Activated CD4-positive, alpha-beta T cell treated with anti-CD3 and anti-CD28 coated beads for 36 hours (primary cell): ENCODE measurements at regions of chr5 and their contacts with region 1.

Region 1: DNA sequence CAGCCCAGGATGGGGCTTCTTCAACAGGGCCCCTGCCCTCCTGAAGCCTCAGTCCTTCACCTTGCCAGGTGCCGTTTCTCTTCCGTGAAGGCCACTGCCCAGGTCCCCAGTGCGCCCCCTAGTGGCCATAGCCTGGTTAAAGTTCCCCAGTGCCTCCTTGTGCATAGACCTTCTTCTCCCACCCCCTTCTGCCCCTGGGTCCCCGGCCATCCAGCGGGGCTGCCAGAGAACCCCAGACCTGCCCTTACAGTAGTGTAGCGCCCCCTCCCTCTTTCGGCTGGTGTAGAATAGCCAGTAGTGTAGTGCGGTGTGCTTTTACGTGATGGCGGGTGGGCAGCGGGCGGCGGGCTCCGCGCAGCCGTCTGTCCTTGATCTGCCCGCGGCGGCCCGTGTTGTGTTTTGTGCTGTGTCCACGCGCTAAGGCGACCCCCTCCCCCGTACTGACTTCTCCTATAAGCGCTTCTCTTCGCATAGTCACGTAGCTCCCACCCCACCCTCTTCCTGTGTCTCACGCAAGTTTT is 23.6 kb downstream of the PCDHGC5 start:
- DNase-seq: peak; percentile 93
- ATAC-seq: peak; percentile 17
- H3K4me3 Mint-ChIP-seq: peak overlapping the region; percentile 75
- H3K27ac Mint-ChIP-seq: peak overlapping the region; percentile 86
- H3K4me1 Mint-ChIP-seq: peaks cover 38% of the 10 kb centered on the region
- H3K27me3 Mint-ChIP-seq: no peaks in the 10 kb centered on the region

Region 2: GRCh38 chr5:141223112-141223783 is 289.2 kb before region 1 on chr5 and contains the start of gene PCDHB14:
- CTCF ChIA-PET with region 1: interaction called, 12 read pairs
- POLR2A ChIA-PET with region 1: no interaction called
- intact Hi-C with region 1: no loop called
- DNase-seq: no peak
- ATAC-seq: no peak
- H3K4me3 Mint-ChIP-seq: peak within 1 kb of the TSS; percentile 18
- H3K27ac Mint-ChIP-seq: no peak within 1 kb of the TSS
- H3K4me1 Mint-ChIP-seq: peaks cover 5% of the 10 kb centered on the region
- H3K27me3 Mint-ChIP-seq: peaks cover 48% of the 10 kb centered on the region
- total RNA-seq, gene PCDHB14: not detected

Region 3: DNA sequence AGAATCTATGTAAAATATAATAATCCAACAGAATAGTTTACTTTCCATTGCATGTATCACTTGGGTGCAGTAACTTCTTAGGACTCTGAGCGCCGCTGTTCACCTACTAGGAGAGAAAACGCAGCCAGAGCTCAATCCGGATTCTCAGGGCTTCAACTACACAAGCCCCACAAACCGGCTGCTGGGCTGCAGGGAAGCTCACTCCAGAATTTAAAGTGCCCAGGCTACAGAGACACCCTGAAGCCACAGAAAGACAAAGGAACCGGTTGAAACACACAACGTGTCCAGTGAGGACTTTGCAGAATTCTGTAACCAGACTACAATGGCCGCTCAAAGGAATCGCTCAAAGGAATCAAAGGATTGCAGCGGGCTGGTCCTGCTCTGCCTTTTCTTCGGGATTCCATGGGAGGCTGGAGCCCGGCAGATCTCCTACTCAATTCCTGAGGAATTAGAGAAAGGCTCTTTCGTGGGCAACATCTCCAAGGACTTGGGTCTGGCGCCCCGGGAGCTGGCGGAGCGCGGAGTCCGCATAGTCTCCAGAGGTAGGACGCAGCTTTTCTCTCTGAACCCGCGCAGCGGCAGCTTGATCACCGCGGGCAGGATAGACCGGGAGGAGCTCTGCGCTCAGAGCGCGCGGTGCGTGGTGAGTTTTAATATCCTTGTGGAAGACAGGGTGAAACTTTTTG is 99.5 kb before region 1 on chr5 and contains the start of gene PCDHGA10:
- CTCF ChIA-PET with region 1: interaction called, 40 read pairs
- POLR2A ChIA-PET with region 1: no interaction called
- intact Hi-C with region 1: loop called (anchors 1 to 2 kb)
- DNase-seq: peak; percentile 74
- ATAC-seq: peak; percentile 76
- H3K4me3 Mint-ChIP-seq: peak within 1 kb of the TSS; percentile 62
- H3K27ac Mint-ChIP-seq: no peak within 1 kb of the TSS
- H3K4me1 Mint-ChIP-seq: peaks cover 10% of the 10 kb centered on the region
- H3K27me3 Mint-ChIP-seq: peaks cover 63% of the 10 kb centered on the region
- total RNA-seq, gene PCDHGA10: 0.07 TPM in 1 of 2 experiments, not detected in the other

Region 4: GRCh38 chr5:141430332-141431113 is 81.9 kb before region 1 on chr5 and contains the start of gene PCDHGA12:
- CTCF ChIA-PET with region 1: interaction called, 21 read pairs
- POLR2A ChIA-PET with region 1: no interaction called
- intact Hi-C with region 1: no loop called
- DNase-seq: peak; percentile 68
- ATAC-seq: peak; percentile 73
- H3K4me3 Mint-ChIP-seq: peak within 1 kb of the TSS; percentile 45
- H3K27ac Mint-ChIP-seq: no peak within 1 kb of the TSS
- H3K4me1 Mint-ChIP-seq: peaks cover 17% of the 10 kb centered on the region
- H3K27me3 Mint-ChIP-seq: peaks cover 69% of the 10 kb centered on the region
- total RNA-seq, gene PCDHGA12: 0.07 to 0.09 TPM

Region 5: DNA sequence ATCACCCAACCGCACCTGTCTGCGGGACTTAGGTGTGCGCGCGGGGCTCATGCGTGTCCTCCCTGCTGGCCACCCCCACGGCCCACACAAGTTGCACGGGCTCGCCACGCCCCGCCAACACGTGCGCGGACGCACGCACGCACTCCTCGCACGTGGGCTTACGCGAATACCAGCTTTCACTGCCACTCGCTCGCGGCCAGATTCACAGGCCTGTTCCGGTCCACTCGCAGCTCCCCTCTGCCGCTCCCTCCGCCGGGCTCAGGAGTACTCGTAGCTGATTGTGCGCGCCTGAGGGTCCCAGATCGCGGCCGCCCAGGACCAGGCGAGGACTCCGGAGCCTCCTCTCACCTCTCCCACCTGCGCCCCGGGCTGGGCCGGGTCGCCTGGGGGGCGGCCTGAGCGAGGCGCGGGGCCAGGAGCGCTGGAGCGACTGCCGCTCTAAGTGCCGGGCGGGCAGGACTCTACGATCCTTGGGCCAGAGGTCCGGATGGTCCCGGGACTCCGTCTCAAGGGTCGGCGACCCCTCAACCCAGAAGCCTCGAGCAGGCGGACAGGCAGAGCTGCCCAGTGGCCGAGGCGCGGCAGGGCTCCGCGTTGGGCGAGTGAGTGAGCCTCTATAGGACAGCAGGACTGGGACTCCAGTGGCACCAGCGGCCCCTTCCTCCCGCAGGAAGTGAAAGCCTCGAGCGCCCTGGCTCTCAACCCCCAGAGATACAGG is 20.1 kb before region 1 on chr5:
- CTCF ChIA-PET with region 1: interaction called, 13 read pairs
- POLR2A ChIA-PET with region 1: no interaction called
- intact Hi-C with region 1: no loop called
- DNase-seq: peak; percentile 59
- ATAC-seq: peak; percentile 50
- H3K4me3 Mint-ChIP-seq: peak overlapping the region; percentile 61
- H3K27ac Mint-ChIP-seq: peak overlapping the region; percentile 53
- H3K4me1 Mint-ChIP-seq: peaks cover 6% of the 10 kb centered on the region
- H3K27me3 Mint-ChIP-seq: peaks cover 71% of the 10 kb centered on the region

Region 6: DNA sequence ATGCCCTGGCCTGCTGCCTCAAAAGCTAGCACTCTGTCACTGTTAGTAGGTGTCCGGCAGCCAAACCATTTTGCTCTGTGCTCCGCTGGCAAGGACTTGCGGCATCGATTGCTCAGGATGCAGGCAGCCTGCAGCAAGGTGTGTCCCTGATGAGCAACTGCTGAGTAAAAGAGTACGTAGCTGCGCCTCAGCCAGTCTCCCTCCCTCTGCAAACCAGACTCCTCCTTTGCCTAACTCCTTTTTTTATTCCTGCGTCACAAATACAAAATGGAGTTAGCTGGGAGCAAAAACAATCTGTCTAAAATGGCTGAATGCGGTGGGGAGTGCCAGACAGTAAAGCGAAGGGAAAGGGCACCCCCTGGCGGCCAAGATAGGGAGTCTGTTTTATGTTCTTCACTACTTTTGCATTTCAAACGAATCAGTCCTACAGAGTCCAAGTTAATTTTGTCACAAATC is 45.3 kb after region 1 on chr5:
- CTCF ChIA-PET with region 1: interaction called, 23 read pairs
- POLR2A ChIA-PET with region 1: no interaction called
- intact Hi-C with region 1: no loop called
- DNase-seq: peak; percentile 88
- ATAC-seq: peak; percentile 90
- H3K4me3 Mint-ChIP-seq: no peak overlapping the region
- H3K27ac Mint-ChIP-seq: peak overlapping the region; percentile 3
- H3K4me1 Mint-ChIP-seq: peaks cover 28% of the 10 kb centered on the region
- H3K27me3 Mint-ChIP-seq: no peaks in the 10 kb centered on the region